Common myeloid progenitor, CD34-positive (primary cell): ENCODE measurements at regions of chr14 and their contacts with region 1.

Region 1: DNA sequence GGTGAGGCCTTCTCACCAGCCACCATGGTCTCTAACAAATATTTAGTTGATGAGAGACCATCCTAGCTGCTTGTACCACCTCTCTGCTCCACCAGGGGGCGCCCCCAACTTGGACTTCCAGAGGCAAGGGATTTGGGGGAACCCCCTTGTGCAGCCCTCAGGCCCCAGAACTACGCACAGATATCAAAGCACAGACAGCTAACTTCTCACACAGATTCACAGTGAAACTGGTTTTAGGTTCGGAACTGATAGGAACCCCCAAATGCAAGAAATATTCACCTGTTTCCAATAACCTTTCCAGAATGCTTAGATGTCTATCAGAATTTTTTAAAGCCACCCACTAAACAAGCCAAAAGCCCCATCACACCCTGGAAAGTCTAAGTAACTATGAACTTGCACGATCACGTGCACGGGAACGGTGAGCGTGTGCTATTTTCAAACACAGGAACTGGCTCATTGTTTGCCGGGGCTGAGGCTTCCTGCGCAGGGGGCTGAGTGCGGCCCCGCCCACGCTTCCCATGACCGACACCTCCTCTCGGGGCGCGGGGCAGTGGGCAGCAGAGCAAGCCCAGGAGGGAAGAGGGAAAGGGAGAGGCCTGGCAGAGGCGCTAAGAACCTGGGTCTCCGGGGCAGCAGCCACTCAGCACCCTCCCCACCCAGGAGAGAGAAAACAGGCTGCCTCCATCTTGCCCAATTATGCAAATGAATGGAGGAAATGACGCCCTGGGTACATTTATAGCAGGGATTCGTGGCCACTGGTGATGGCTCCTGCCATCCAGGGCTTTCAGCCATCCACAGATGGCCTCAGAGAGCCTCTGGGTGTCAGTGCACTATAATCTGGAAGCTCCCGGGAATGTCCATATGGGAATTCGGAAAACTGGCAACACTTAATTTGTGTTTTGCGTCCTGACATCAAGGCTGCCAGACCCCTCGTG is 79.4 kb upstream of the GPR68 start:
- DNase-seq: peak; percentile 92 to 96 (median 95)
- H3K4me3 ChIP-seq: peak overlapping the region in 5 of 7 experiments; percentile 11 to 64 (median 49)
- H3K27ac ChIP-seq: peak overlapping the region; percentile 76 to 85
- H3K4me1 ChIP-seq: peaks cover 15 to 67% (median 63%) of the 10 kb centered on the region in 4 experiments
- H3K27me3 ChIP-seq: no peaks in the 10 kb centered on the region

Region 2: DNA sequence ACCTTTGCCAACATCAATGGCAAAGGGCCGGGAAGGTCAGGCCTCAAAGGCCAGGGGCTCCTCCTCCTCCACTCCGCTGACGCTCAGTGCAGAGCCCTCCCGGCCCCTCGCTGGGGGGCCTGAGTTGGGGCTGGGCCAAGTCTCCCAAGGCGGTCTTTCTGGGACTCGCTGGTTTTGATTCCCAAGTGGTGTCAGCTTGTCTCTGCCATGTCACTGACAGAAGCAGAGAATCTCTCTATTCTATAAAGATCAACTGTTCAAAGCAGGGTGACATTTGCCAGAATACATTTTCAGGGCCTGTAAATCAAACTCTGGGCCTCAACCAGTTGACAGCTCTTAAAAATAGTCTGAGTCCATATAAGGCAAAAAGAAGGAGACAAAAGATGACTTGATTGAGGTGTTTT is 17.8 kb after region 1 on chr14:
- CTCF ChIA-PET with region 1: interaction called, 114 read pairs
- POLR2A ChIA-PET with region 1: no interaction called
- DNase-seq: no peak
- H3K4me3 ChIP-seq: no peak overlapping the region
- H3K27ac ChIP-seq: no peak overlapping the region
- H3K4me1 ChIP-seq: peaks cover 0 to 21% (median 6%) of the 10 kb centered on the region in 4 experiments
- H3K27me3 ChIP-seq: no peaks in the 10 kb centered on the region

Region 3: DNA sequence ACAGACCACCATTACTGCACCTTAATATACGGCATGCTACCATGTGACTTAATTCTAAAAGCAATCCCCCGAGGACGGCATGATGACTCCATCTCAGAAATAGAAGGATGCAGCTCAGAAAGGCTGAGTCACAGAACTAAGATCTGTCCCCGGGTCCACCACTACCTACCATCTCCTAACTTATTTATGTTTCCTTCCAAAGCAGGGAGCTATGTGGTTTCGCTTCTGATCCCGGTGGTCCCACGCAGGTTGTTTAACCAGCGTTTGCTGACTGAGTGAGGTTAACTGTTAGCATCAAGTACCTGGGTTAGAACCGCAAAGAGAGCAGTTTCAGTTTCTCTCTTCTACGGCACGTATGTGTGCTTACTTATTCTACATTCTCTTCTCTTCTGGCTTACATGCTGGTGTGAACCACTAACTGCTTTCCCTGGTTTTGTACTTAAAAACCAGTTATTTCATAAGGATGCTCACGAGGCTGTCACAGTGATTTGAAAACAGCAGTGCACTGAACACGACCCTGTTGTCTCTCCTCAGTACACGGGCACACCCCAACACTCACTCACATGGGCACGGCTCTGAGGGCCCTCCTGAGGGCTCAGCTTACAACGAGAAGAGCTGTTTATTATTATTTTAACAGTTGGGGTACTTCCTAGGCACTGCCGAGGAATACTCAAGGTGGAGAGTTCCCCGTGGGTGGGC is 27.0 kb after region 1 on chr14:
- CTCF ChIA-PET with region 1: interaction called, 114 read pairs
- POLR2A ChIA-PET with region 1: interaction called, 3 read pairs
- DNase-seq: peak; percentile 56 to 87 (median 84)
- H3K4me3 ChIP-seq: peak overlapping the region in 6 of 7 experiments; percentile 2 to 78 (median 38)
- H3K27ac ChIP-seq: no peak overlapping the region
- H3K4me1 ChIP-seq: peaks cover 4 to 48% (median 34%) of the 10 kb centered on the region in 4 experiments
- H3K27me3 ChIP-seq: no peaks in the 10 kb centered on the region

Region 4: DNA sequence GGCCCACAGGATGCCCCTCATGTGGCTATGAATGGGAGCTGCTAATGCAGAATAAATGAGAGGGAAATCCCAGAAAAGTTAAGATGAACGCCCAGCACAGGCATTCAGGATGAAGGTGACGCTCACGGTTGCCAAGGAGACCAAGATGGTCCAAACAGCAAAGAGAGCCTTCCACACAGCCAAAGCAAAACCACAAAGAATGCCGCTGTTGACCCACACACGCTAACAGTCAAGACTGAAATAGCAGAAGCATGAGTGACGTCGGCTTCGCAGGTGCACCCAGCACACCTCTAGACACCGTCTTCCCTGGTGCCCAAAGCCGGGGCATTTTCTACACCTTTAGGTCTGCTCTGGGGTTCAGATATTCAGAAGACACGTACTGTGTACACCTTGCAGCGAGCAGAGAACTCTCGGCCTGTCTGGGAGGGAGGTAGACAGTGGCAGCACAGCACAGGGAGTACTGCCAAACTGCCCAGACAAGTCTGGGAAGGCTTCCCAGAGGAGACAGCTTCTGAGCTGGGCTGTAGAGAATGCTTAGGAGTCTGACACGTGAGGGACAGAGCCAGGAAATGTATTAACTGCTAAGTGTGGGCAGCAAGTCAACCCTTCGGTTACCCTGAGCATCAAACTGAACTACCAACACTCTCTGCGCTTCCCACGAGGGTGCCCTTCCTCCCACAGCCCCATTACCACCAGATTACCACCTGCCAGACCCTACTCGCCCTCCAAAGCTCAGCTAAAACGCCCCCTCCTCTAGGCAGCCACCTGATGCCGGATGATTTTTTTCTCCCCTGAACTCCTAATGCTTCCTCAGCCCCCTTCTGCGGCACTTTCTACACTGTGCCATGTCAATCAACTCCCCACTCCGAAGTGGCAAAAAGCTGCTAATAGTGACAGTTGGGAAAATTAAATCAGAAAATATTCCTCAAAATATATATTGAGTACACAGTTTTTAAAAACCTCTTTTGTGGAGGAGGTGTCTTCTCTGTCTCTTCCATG is 43.5 kb after region 1 on chr14:
- CTCF ChIA-PET with region 1: interaction called, 11 read pairs
- POLR2A ChIA-PET with region 1: no interaction called
- DNase-seq: peak; percentile 91 to 94 (median 93)
- H3K4me3 ChIP-seq: peak overlapping the region in 3 of 7 experiments; percentile 11 to 54 (median 13)
- H3K27ac ChIP-seq: peak overlapping the region; percentile 79 to 89
- H3K4me1 ChIP-seq: peaks cover 15 to 87% (median 75%) of the 10 kb centered on the region in 4 experiments
- H3K27me3 ChIP-seq: no peaks in the 10 kb centered on the region

Region 5: DNA sequence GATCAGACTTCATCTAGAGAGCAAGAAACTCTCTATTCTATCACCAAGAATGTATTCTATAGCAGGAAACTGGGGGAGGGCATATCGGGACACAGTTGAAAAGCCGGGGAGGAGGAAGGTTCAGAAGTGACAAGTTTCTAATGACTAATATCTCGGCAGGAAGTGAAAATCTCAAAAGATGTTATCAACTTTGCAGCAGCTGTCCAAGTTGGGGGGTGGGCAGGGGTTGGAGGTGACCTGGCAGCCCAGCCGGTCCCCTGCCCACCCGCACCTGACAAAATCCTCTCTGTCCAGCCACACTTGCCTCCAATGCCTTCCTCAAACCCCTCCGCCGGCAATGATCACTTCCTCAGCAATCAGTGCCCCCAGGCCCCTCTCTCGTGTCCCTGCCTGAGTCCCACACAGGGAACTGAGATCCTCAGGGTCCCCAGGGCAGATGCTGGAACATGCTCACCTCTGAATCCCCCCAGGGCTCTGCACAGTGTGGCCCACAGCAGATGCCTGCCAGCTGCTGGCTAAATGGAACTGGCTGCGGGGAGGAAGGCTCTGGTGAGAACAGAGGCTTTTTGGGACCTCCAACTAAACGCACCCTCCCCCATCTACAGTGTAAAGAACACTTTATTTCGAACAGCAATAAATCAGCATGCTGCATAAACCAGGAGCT is 49.8 kb after region 1 on chr14:
- CTCF ChIA-PET with region 1: interaction called, 15 read pairs
- POLR2A ChIA-PET with region 1: no interaction called
- DNase-seq: peak in 2 of 3 donors; percentile 76 to 83
- H3K4me3 ChIP-seq: peak overlapping the region in 4 of 7 experiments; percentile 11 to 54 (median 42)
- H3K27ac ChIP-seq: peak overlapping the region in 1 of 2 experiments; percentile 55
- H3K4me1 ChIP-seq: peaks cover 19 to 95% (median 80%) of the 10 kb centered on the region in 4 experiments
- H3K27me3 ChIP-seq: no peaks in the 10 kb centered on the region

Region 6: DNA sequence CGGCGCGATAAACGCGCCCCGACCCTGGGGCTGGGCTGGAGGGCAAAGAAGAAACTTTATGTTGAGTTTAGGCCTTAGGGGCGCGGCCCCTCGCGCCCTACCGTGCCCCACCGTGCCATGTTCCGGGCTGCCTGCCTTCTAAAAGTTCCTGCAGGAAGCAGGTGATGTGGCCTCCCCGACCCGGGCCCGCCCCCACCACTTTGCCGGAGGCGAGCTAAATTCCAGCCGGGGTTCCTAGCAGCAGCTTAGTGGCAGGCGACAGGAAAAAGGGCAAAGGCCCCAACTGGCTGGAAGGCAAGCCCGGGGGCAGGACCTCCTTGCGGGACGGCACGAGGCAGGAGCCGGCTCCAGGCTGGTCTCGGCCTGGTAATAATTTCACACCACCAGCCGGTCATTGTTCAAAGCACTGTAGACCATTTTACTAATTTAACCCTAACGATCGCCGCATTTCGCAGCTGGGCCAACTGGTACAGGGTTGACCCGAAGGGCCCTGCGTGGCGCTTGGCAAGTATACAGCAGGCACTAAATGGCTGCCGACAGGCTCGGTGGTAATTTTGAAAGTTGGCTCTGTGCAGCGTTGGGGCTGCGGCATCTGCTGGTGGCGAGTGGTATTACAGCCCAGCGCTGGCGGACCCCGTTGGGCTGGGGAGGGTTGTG is 94.6 kb after region 1 on chr14:
- CTCF ChIA-PET with region 1: interaction called, 268 read pairs
- POLR2A ChIA-PET with region 1: interaction called, 8 read pairs
- DNase-seq: peak; percentile 55 to 79 (median 73)
- H3K4me3 ChIP-seq: peak overlapping the region in 6 of 7 experiments; percentile 74 to 91 (median 79)
- H3K27ac ChIP-seq: no peak overlapping the region
- H3K4me1 ChIP-seq: peaks cover 10 to 44% (median 41%) of the 10 kb centered on the region in 4 experiments
- H3K27me3 ChIP-seq: no peaks in the 10 kb centered on the region